GM18951 (cell line): ENCODE measurements at regions of chr6 and their contacts with region 1.

Region 1: DNA sequence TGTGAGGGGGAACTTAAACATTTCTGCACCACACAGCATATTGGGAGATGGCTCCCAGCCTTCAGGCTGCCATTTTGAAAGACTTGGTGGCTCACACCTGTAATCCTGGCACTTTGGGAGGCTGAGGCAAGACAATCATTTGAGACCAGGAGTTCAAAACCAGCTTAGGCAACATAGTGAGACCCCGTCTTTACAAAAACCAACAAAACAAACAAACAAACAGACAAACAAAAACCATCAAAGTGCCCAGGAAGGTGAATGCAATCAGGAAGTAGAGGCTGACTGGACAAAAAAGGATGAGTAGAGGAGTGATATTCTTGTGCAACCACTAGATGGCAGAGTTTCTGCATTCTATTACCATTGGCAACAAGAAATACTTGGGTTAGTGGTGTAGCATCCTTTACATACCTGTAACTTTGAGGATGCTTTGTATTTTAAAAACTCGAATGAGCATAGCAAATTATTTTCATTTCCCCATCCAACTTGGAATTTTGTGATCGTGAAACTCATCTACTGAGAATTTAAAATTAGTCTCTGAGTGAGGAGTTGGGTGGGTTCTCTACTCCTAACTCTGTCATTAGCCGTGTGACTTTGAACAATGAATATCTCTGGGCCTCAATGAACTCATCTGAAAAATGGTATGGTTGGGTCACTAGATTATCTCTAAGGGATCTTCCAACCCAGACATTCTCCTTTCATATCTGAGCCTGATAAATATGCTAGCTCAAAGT is 84.4 kb downstream of the CRYBG1 start:
- POLR2A ChIP-seq: no peak

Region 2: DNA sequence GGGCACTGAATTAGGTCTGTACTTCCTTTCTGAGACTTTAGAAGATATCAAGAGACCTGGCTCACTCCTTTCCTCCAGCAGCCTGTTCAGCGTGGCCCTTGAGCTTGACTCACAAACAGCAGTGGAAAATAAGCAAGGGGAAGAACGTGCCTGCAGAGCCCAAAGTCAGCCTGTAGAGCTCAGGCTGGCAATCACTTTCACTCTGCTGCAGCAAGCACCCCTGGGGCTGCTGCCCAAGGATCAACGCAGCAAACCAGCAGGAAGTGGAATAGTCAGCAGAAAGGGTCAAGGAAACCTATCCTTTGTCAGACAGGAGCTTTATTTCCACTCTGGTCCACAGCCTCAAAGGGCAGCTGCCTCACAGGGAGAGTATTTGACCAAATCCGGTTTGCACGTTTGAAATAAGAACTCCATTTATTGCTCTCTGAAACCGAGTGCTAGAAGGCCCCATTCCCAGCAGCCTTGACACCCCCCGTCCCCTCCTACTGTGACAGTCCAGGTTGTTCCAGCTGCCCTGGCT is 281.4 kb before region 1 on chr6:
- in situ Hi-C with region 1: no loop called
- POLR2A ChIP-seq: peak; percentile 12

Region 3: GRCh38 chr6:106339334-106340029 is 105.5 kb before region 1 on chr6:
- in situ Hi-C with region 1: loop called (anchors 10 kb)
- POLR2A ChIP-seq: no peak

Region 4: GRCh38 chr6:106568530-106568929 is 123.6 kb after region 1 on chr6:
- in situ Hi-C with region 1: loop called (anchors 5 kb)
- POLR2A ChIP-seq: no peak

Region 5: DNA sequence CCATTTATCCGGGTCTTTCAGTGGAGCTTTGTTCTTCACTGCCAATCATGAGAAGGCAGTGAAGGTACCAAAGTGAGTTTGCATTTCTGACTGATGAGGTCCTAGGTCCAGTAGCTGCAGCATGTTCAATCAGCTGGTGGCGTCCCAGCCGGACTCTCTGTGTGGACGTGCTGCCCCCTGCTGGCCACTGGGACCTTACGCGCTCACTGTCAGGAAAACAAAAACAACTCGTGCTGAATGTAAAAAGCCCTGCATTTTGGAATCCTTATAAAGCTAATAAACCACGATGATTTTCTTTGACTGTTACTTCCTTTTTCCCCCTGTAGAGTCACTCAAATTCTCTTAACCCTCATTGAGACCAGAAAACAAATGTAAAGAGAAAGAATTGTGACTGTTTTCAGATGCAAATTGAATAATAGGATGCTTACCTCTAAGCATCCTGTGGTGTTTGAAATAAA is 534.5 kb after region 1 on chr6:
- in situ Hi-C with region 1: loop called (anchors 10 kb)
- POLR2A ChIP-seq: no peak